PC-9 (cell line): ENCODE measurements at regions of chr11 and their contacts with region 1.

Region 1: GRCh38 chr11:28697920-28698827 is 590.0 kb downstream of the METTL15 start:
- DNase-seq: peak in 1 of 2 experiments; percentile 37
- H3K4me3 ChIP-seq: no peak overlapping the region
- H3K27ac ChIP-seq: no peak overlapping the region
- H3K4me1 ChIP-seq: peaks cover 24% of the 10 kb centered on the region
- H3K27me3 ChIP-seq: no peaks in the 10 kb centered on the region
- CTCF ChIP-seq: peak; percentile 81

Region 2: GRCh38 chr11:28323621-28324020 is 374.6 kb before region 1 on chr11:
- CTCF ChIA-PET with region 1: no interaction called
- POLR2A ChIA-PET with region 1: no interaction called
- intact Hi-C with region 1: loop called (anchors 10 kb)
- DNase-seq: no peak
- H3K4me3 ChIP-seq: no peak overlapping the region
- H3K27ac ChIP-seq: no peak overlapping the region
- H3K4me1 ChIP-seq: no peaks in the 10 kb centered on the region
- H3K27me3 ChIP-seq: no peaks in the 10 kb centered on the region
- CTCF ChIP-seq: no peak

Region 3: GRCh38 chr11:28343276-28344233 is 354.6 kb before region 1 on chr11:
- CTCF ChIA-PET with region 1: no interaction called
- POLR2A ChIA-PET with region 1: no interaction called
- intact Hi-C with region 1: loop called (anchors 10 kb)
- DNase-seq: peak; percentile 38 to 61
- H3K4me3 ChIP-seq: no peak overlapping the region
- H3K27ac ChIP-seq: peak overlapping the region; percentile 81
- H3K4me1 ChIP-seq: peaks cover 37% of the 10 kb centered on the region
- H3K27me3 ChIP-seq: no peaks in the 10 kb centered on the region
- CTCF ChIP-seq: no peak

Region 4: DNA sequence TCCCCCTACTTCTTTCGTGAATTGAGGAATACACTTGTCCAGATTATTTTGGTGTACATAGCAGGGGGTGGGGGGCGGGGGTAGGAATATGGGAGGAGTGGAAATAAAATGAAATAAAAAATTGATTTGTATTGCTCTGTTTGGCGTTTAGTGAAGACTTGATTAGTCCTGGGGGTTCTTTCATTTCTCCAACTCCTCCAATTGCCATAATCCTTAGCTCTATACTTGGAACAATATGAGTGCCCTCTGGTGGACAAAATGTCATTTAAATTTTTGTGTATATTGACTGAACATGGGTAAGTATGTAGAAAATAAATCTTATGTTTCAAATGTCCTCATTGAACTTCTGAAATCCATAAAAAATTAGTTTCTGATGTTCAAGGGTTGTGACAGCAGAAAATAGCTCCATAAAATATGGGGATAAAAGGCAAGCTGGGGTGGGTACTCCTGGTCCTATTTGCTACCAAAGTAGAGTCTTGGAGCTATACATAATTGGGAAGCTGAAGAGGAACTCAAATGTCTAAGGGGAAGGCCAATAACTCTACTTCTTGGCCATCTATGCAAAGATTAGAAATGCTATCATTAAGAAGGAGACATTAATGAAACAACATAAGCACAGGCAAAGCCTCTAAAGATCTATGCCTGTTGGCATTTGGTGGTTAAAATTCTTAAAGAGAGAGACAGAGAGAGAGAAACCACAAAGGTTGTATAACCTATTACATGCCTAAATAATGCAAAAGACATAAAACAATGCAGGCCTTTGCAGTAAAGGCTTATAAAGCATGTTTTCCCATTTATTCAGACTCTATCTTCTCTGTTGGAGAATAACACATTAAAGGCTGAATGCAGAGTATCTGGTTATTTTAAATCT is 168.4 kb before region 1 on chr11:
- CTCF ChIA-PET with region 1: no interaction called
- POLR2A ChIA-PET with region 1: no interaction called
- intact Hi-C with region 1: loop called (anchors 10 kb)
- DNase-seq: no peak
- H3K4me3 ChIP-seq: no peak overlapping the region
- H3K27ac ChIP-seq: no peak overlapping the region
- H3K4me1 ChIP-seq: no peaks in the 10 kb centered on the region
- H3K27me3 ChIP-seq: no peaks in the 10 kb centered on the region
- CTCF ChIP-seq: peak; percentile 76